Activated CD4-positive, alpha-beta memory T cell treated with anti-CD3 and anti-CD28 coated beads, Interleukin-2, amount 10 ng/mL, durations not matched to agents 7 days and 5 days (primary cell): ENCODE measurements at regions of chr13 and their contacts with region 1.

Region 1: DNA sequence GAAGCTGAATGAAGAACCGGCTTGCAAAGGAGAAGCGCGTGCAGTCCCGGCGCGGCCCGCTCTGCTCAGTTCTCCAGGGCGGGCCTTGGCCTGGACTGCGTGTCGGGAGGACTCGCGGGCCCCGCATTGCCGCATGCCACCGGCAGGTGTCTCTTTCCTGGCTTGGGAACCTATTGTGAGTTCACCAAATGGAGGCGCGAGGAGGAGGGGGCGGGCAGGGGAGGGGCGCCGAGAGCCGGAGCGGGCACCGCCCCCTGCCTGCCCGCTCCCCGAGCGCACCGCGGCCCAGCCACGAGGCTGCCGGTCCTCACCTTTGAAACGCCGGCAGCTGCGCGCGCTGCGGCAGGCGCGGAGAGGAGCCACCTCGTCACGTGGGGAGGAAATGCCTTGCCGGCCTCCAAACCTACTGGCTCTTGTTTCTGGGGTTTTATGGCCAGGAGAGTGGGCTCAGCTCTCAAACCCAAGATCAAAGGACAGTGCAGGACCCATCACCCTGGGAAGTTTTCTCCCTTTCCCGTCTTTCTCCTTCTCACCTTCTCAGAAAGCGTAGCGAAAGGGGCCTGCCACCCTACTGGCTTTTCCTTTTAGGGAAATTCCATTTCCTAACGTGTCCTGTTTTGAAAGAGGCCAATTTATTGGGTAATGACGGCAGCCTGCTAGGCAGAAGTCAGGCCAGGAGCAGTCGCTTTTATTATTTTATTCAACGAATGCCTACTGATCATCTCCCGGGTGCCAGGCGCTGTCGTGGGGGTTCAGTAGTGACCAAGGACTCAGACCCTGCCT is 13.8 kb upstream of the UBE2L5 start:
- DNase-seq: peak; percentile 93
- H3K4me3 Mint-ChIP-seq: peak overlapping the region; percentile 44
- H3K27ac Mint-ChIP-seq: peak overlapping the region; percentile 31
- H3K4me1 Mint-ChIP-seq: peaks cover 29% of the 10 kb centered on the region
- H3K27me3 Mint-ChIP-seq: peaks cover 11% of the 10 kb centered on the region

Region 2: DNA sequence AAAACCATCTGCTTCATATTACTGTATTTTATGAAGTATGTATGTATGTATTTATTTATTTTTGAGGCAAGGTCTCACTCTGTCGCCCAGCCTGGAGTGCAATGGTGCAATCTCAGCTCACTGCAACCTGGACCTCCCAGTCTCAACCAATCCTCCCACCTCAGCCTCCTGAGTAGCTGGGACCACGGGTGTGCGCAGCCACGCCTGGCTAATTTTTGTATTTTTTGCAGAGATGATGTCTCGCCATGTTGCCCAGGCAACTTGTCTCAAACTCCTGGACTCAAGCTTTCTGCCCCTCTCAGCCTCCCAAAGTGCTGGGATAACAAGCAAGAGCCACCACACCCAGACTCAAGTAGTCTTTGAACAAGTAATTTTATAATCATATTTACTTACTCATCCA is 106.7 kb before region 1 on chr13:
- CTCF ChIA-PET with region 1: no interaction called
- POLR2A ChIA-PET with region 1: no interaction called
- DNase-seq: no peak
- H3K4me3 Mint-ChIP-seq: no peak overlapping the region
- H3K27ac Mint-ChIP-seq: no peak overlapping the region
- H3K4me1 Mint-ChIP-seq: peaks cover 40% of the 10 kb centered on the region
- H3K27me3 Mint-ChIP-seq: no peaks in the 10 kb centered on the region

Region 3: DNA sequence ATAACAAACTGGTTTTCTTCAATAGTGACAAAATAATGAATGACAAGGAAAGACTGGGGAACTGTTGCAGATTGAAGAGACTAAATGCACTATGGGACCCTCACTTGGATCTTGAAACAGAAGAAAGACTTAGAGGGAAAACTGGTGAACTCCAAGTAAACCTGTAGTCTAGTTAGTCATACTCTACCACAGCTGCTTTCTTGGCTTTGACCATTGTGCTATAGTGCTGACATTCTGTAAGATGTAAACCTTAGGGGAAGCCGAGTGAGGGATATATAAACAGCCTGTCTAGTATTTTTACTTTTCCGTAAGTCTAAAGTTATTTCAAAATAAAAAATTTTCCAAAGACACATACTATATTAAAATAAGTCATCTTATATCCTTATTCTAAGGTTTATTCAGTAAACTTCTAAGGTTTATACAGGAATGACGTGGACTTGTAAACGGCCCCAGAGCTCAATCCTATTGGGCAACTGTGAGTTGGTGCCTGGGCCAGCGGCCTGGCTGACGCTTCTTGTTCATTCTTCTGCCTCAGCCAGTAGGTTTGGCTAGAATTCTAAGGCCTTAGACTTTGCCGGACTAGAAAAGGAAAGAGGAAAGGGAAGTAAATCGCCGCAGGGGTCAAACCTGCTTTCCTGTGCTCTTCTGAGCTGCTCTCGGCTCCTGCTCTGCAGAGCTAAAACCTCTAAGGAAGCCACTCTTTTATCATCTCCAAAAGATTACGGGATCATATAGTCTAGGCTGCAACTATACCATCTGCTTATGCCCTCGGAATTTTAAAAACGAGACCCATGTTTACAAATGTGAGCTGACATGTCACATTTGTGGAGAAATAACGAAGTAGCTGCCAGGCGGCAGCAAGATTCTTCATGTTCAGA is 19.9 kb before region 1 on chr13:
- CTCF ChIA-PET with region 1: interaction called, 6 read pairs
- POLR2A ChIA-PET with region 1: interaction called, 40 read pairs
- DNase-seq: no peak
- H3K4me3 Mint-ChIP-seq: peak overlapping the region; percentile 48
- H3K27ac Mint-ChIP-seq: peak overlapping the region; percentile 83
- H3K4me1 Mint-ChIP-seq: peaks cover 26% of the 10 kb centered on the region
- H3K27me3 Mint-ChIP-seq: no peaks in the 10 kb centered on the region

Region 4: DNA sequence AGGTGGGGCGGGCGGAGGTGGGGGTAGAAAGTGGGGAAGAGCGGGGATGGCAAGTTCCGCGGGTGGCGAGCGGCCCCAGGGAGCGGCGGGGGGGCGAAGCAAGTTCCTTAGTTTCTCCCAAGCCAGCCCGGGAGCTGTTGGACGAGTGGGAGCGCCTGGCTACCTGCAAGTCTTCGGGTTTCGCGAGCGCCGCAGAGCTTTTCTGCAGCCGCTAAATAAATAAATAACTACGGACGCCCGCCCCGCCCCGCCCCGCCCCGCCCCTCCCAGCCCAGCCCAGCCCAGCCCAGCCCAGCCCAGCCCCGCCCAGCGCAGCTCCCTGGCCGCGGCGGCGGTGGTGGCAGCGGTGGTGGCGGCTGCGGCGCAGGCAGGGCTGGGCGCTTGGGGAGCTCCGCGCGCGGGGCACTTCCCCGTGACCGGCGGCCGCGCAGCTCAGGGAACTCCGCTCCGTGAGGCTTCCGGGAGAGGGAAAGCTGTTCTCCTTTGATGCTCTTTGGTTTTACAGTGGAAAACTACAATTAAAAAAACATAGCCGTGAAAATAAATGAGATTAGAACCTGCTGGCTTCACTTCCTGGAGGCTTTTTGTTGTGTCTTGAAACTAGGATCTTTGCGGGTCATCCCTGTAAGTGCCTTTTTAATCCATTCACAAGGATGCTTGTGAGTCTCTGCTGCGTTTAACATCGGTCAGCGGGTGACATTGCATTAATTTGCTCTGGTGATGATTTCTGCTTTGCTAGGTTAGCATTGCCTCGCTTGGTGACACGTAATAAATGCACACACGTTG is 13.7 kb after region 1 on chr13 and contains the start of gene UBE2L5:
- CTCF ChIA-PET with region 1: interaction called, 5 read pairs
- POLR2A ChIA-PET with region 1: interaction called, 10 read pairs
- DNase-seq: peak; percentile 80
- H3K4me3 Mint-ChIP-seq: peak within 1 kb of the TSS; percentile 77
- H3K27ac Mint-ChIP-seq: peak within 1 kb of the TSS; percentile 73
- H3K4me1 Mint-ChIP-seq: peaks cover 15% of the 10 kb centered on the region
- H3K27me3 Mint-ChIP-seq: peaks cover 4% of the 10 kb centered on the region
- total RNA-seq, gene UBE2L5: 0.20 TPM in 1 of 2 experiments, not detected in the other